WTC11 (cell line): ENCODE measurements at regions of chr2 and their contacts with region 1.

Region 1: GRCh38 chr2:30956995-30957394 is 149.7 kb upstream of the CAPN13 start:
- DNase-seq: no peak
- ATAC-seq: no peak
- H3K4me3 Mint-ChIP-seq: no peak overlapping the region
- H3K27ac Mint-ChIP-seq: no peak overlapping the region
- H3K4me1 Mint-ChIP-seq: peaks cover 9% of the 10 kb centered on the region
- H3K27me3 Mint-ChIP-seq: no peaks in the 10 kb centered on the region; the same call in 1 of the 2 replicates
- CTCF ChIP-seq: no peak

Region 2: GRCh38 chr2:30871980-30872789 is 84.8 kb before region 1 on chr2:
- CTCF ChIA-PET with region 1: no interaction called
- POLR2A ChIA-PET with region 1: no interaction called
- DNase-seq: no peak
- ATAC-seq: peak; percentile 89
- H3K4me3 Mint-ChIP-seq: no peak overlapping the region
- H3K27ac Mint-ChIP-seq: peak overlapping the region; percentile 82
- H3K4me1 Mint-ChIP-seq: peaks cover 16% of the 10 kb centered on the region
- H3K27me3 Mint-ChIP-seq: no peaks in the 10 kb centered on the region
- CTCF ChIP-seq: no peak

Region 3: GRCh38 chr2:30927465-30928075 is 29.4 kb before region 1 on chr2:
- CTCF ChIA-PET with region 1: no interaction called
- POLR2A ChIA-PET with region 1: no interaction called
- DNase-seq: no peak
- ATAC-seq: no peak
- H3K4me3 Mint-ChIP-seq: no peak overlapping the region
- H3K27ac Mint-ChIP-seq: no peak overlapping the region
- H3K4me1 Mint-ChIP-seq: peaks cover 17% of the 10 kb centered on the region
- H3K27me3 Mint-ChIP-seq: no peaks in the 10 kb centered on the region
- CTCF ChIP-seq: no peak

Region 4: GRCh38 chr2:30971231-30972025 is 14.4 kb after region 1 on chr2:
- CTCF ChIA-PET with region 1: no interaction called
- POLR2A ChIA-PET with region 1: no interaction called
- DNase-seq: no peak
- ATAC-seq: no peak
- H3K4me3 Mint-ChIP-seq: no peak overlapping the region
- H3K27ac Mint-ChIP-seq: no peak overlapping the region
- H3K4me1 Mint-ChIP-seq: no peaks in the 10 kb centered on the region
- H3K27me3 Mint-ChIP-seq: no peaks in the 10 kb centered on the region
- CTCF ChIP-seq: no peak

Region 5: DNA sequence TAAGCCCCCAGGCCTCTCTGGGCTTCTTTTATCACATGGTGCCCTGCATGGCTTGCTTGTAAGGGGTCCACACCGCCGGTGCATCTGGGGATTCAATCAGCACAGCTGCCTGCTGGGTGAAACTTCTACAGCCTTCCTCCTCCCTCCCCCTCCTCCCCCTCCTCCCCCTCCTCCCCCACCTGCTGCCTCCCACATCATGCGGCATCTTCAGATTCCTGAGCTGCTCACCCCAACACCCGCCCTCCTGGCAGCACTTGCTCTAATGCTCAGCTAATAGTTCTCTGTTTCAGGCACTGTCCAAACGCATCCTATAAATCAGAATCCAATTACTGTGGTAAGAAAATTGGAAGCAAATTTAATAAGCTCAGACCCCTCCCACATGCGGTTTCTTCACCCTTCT is 30.6 kb after region 1 on chr2:
- CTCF ChIA-PET with region 1: no interaction called
- POLR2A ChIA-PET with region 1: interaction called, 11 read pairs
- DNase-seq: no peak
- ATAC-seq: no peak; the same call in 1 of the 2 replicates
- H3K4me3 Mint-ChIP-seq: no peak overlapping the region
- H3K27ac Mint-ChIP-seq: no peak overlapping the region
- H3K4me1 Mint-ChIP-seq: peaks cover 19% of the 10 kb centered on the region
- H3K27me3 Mint-ChIP-seq: no peaks in the 10 kb centered on the region
- CTCF ChIP-seq: no peak

Region 6: DNA sequence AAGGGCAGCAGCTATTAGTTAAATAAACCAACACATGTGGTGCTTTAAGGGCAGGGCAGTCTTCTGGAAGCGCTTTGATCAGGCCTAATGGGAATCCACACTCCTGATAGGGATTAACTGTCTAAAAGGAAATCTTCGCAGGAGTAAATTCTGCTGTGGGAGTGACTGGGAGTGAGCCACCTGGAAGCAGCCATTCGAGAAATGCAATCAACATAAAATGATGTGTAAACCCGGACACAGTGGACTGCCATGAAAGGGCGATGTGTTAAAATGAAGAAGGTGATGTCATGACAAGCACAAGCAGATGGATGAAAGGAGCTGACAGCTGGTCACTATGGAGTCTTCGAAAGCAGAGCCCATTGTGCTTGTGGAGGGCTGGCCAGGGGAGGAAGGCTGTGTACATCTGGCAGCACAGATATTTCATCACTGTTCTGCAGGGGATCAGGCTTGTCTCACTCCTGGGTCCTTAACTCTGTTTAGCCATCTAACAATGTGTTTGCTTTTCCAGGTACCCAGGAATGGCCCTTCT is 206.1 kb after region 1 on chr2:
- CTCF ChIA-PET with region 1: no interaction called
- POLR2A ChIA-PET with region 1: no interaction called
- DNase-seq: no peak
- ATAC-seq: no peak
- H3K4me3 Mint-ChIP-seq: no peak overlapping the region
- H3K27ac Mint-ChIP-seq: no peak overlapping the region
- H3K4me1 Mint-ChIP-seq: no peaks in the 10 kb centered on the region
- H3K27me3 Mint-ChIP-seq: no peaks in the 10 kb centered on the region
- CTCF ChIP-seq: no peak